ENCODE measurements at regions of chr4 and their contacts with region 1.

Region 1: GRCh38 chr4:142353149-142353738 is 492.9 kb downstream of the INPP4B start:
- DNase-seq: no peak
- H3K4me3 Mint-ChIP-seq: peak overlapping the region; percentile 55
- H3K27ac Mint-ChIP-seq: peak overlapping the region; percentile 87
- H3K4me1 Mint-ChIP-seq: peaks cover 95% of the 10 kb centered on the region
- H3K27me3 Mint-ChIP-seq: no peaks in the 10 kb centered on the region

Region 2: GRCh38 chr4:140743194-140743931 is 1609.9 kb before region 1 on chr4:
- CTCF ChIA-PET with region 1: no interaction called
- POLR2A ChIA-PET with region 1: no interaction called
- intact Hi-C with region 1: no loop called
- DNase-seq: no peak
- H3K4me3 Mint-ChIP-seq: no peak overlapping the region
- H3K27ac Mint-ChIP-seq: no peak overlapping the region
- H3K4me1 Mint-ChIP-seq: peaks cover 2% of the 10 kb centered on the region
- H3K27me3 Mint-ChIP-seq: peaks cover 10% of the 10 kb centered on the region

Region 3: GRCh38 chr4:142282870-142283431 is 70.3 kb before region 1 on chr4:
- CTCF ChIA-PET with region 1: interaction called, 11 read pairs
- POLR2A ChIA-PET with region 1: no interaction called
- intact Hi-C with region 1: loop called (anchors 2 kb)
- DNase-seq: no peak
- H3K4me3 Mint-ChIP-seq: no peak overlapping the region
- H3K27ac Mint-ChIP-seq: no peak overlapping the region
- H3K4me1 Mint-ChIP-seq: peaks cover 26% of the 10 kb centered on the region
- H3K27me3 Mint-ChIP-seq: no peaks in the 10 kb centered on the region

Region 4: DNA sequence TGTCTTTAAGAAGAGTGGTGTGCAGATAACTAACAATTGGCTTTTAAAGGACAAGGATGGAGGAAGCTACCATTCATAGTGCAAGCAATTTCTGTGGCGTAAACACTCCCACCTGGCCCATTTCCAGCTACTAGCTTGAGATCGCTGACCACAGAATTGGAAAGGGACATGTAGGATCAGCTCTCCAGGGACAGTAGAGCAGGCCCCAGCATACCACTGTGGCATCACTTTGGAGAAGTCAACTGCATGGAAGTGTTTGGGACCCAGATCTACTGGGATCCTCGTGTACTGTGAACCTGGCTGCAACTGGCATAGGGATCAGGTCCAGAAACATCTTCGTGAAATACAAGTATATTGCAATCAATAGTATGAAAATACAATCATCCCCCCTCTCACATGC is 22.1 kb before region 1 on chr4:
- CTCF ChIA-PET with region 1: interaction called, 10 read pairs
- POLR2A ChIA-PET with region 1: no interaction called
- intact Hi-C with region 1: no loop called
- DNase-seq: no peak
- H3K4me3 Mint-ChIP-seq: no peak overlapping the region
- H3K27ac Mint-ChIP-seq: peak overlapping the region; percentile 30
- H3K4me1 Mint-ChIP-seq: peaks cover 74% of the 10 kb centered on the region
- H3K27me3 Mint-ChIP-seq: no peaks in the 10 kb centered on the region

Region 5: GRCh38 chr4:142379277-142380057 is 26.2 kb after region 1 on chr4:
- CTCF ChIA-PET with region 1: interaction called, 19 read pairs
- POLR2A ChIA-PET with region 1: interaction called, 6 read pairs
- intact Hi-C with region 1: loop called (anchors 1 kb)
- DNase-seq: no peak
- H3K4me3 Mint-ChIP-seq: no peak overlapping the region
- H3K27ac Mint-ChIP-seq: peak overlapping the region; percentile 85
- H3K4me1 Mint-ChIP-seq: peaks cover 78% of the 10 kb centered on the region
- H3K27me3 Mint-ChIP-seq: no peaks in the 10 kb centered on the region

Region 6: GRCh38 chr4:142713282-142714030 is 360.2 kb after region 1 on chr4:
- CTCF ChIA-PET with region 1: interaction called, 5 read pairs
- POLR2A ChIA-PET with region 1: no interaction called
- intact Hi-C with region 1: loop called (anchors 5 kb)
- DNase-seq: no peak
- H3K4me3 Mint-ChIP-seq: peak overlapping the region; percentile 17
- H3K27ac Mint-ChIP-seq: peak overlapping the region; percentile 87
- H3K4me1 Mint-ChIP-seq: peaks cover 61% of the 10 kb centered on the region
- H3K27me3 Mint-ChIP-seq: no peaks in the 10 kb centered on the region

Region 7: DNA sequence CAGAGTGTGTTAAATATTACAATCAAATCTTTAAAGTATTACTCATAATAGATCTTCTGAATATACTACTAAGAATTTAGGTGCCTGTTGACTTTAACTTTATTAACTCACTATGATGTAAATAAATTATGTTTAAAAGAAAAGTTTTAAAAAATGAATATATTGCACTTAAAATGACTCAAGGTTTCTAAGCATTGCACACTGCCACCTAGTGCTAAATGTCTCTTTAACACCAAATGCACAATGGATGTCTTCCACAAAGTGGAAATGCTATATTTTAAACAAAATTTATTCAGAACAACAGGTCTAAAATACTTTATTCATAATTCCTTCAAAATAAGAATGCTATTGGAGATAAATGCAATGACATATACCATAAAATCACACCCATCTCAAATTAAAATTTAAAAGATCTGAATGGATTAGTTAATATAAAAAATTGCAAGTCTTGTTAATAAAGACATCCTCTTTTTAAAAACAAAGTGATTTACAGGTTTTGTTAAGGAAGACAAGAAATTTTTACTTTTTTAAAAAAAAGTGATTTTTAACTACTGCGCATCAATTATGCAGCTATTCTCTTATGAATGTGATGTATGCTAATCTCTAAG is 487.4 kb after region 1 on chr4:
- CTCF ChIA-PET with region 1: no interaction called
- POLR2A ChIA-PET with region 1: no interaction called
- intact Hi-C with region 1: loop called (anchors 1 kb)
- DNase-seq: no peak
- H3K4me3 Mint-ChIP-seq: no peak overlapping the region
- H3K27ac Mint-ChIP-seq: no peak overlapping the region
- H3K4me1 Mint-ChIP-seq: peaks cover 21% of the 10 kb centered on the region
- H3K27me3 Mint-ChIP-seq: peaks cover 2% of the 10 kb centered on the region

Measured in activated CD4-positive, alpha-beta memory T cell treated with anti-CD3 and anti-CD28 coated beads for 36 hours (primary cell).